ENCODE measurements at regions of chr17 and their contacts with region 1.

Region 1: DNA sequence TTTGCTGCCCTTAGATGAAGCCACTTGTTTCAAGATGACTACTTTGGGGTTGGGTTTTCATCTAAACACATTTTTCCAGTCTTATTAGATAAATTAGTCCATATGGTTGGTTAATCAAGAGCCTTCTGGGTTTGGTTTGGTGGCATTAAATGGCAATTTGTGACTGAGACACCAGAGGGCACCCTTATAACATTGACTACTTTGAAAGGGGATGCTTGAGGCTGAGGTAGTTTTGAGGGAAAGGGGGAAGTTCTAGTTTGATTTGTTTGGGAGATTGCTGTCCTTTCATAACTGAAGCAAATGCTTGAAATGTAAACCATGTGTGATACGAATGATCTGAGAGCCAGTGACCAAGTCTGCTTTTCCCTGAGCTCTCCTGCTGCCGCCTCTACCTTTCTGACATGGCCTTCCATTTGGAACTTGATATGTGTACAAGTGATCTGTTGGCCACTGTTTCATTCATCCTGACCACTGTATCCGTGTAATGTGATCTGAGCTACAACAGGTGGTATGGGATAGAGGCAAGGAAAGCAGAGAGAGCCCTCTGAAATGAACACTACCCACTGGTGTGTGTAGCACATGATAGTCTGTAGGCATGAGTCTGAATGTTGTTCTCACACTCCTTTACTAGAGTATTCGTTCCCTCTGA is 5.8 kb upstream of the RARA start:
- DNase-seq: peak; percentile 71 to 78
- ATAC-seq: peak; percentile 65 to 79
- H3K4me3 ChIP-seq: no peak overlapping the region
- H3K27ac ChIP-seq: peak overlapping the region; percentile 17 to 47; a peak in 4 of 6 replicates
- H3K4me1 ChIP-seq: peaks cover 38% of the 10 kb centered on the region
- CTCF ChIP-seq: peak; percentile 97
- EP300 ChIP-seq: no peak
- POLR2A ChIP-seq: no peak
- RAD21 ChIP-seq: peak; percentile 96 to 98

Region 2: DNA sequence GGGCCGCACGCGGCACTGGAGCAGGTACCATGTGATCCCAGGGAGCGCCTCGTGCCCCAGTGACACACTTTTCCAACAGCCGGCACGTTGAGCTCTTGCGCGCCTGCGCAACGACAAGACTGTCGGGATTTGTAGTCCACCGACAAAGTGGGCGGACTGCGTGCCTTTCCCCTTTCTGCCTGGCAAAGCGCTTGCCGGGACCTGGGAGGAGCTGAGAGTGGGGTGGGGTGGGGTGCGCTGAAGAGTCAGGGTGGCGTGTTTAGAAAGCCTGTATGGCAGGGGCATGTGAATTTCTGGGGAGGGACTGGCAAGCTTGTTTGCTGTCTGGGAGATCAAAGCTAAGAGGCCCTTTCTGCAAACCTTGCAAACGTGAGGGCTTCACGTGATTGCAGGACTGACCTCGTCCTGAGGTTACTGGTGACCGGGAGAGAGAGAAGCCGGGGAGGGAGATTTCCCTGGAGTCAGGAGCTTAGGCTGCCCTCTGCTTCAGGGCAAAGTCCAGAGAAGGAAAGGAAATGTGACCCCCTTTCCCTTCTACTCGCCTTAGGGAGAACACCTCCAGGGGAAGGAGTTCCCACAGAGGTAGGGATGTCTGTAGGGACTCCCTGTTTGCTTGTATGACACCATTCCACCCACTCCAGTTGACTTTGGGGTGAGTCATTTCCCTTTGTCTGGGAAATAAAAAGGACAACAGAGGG is 202.3 kb before region 1 on chr17:
- CTCF ChIA-PET with region 1: no interaction called
- POLR2A ChIA-PET with region 1: no interaction called
- DNase-seq: peak; percentile 99 to 100
- ATAC-seq: peak; percentile 62 to 82
- H3K4me3 ChIP-seq: peak overlapping the region; percentile 54
- H3K27ac ChIP-seq: peak overlapping the region; percentile 89
- H3K4me1 ChIP-seq: peaks cover 63% of the 10 kb centered on the region
- CTCF ChIP-seq: no peak
- EP300 ChIP-seq: peak in 1 of 2 experiments; percentile 34; a peak in 1 of 5 replicates
- POLR2A ChIP-seq: no peak
- RAD21 ChIP-seq: 0 out of 5 replicates have a peak, but pooled peaks of 1 of the 2 experiments have one; percentile 23

Region 3: GRCh38 chr17:40203131-40203530 is 100.0 kb before region 1 on chr17:
- CTCF ChIA-PET with region 1: interaction called, 232 read pairs
- POLR2A ChIA-PET with region 1: no interaction called
- DNase-seq: no peak
- ATAC-seq: no peak
- H3K4me3 ChIP-seq: no peak overlapping the region
- H3K27ac ChIP-seq: no peak overlapping the region
- H3K4me1 ChIP-seq: no peaks in the 10 kb centered on the region
- CTCF ChIP-seq: no peak
- EP300 ChIP-seq: no peak
- POLR2A ChIP-seq: no peak
- RAD21 ChIP-seq: no peak

Region 4: DNA sequence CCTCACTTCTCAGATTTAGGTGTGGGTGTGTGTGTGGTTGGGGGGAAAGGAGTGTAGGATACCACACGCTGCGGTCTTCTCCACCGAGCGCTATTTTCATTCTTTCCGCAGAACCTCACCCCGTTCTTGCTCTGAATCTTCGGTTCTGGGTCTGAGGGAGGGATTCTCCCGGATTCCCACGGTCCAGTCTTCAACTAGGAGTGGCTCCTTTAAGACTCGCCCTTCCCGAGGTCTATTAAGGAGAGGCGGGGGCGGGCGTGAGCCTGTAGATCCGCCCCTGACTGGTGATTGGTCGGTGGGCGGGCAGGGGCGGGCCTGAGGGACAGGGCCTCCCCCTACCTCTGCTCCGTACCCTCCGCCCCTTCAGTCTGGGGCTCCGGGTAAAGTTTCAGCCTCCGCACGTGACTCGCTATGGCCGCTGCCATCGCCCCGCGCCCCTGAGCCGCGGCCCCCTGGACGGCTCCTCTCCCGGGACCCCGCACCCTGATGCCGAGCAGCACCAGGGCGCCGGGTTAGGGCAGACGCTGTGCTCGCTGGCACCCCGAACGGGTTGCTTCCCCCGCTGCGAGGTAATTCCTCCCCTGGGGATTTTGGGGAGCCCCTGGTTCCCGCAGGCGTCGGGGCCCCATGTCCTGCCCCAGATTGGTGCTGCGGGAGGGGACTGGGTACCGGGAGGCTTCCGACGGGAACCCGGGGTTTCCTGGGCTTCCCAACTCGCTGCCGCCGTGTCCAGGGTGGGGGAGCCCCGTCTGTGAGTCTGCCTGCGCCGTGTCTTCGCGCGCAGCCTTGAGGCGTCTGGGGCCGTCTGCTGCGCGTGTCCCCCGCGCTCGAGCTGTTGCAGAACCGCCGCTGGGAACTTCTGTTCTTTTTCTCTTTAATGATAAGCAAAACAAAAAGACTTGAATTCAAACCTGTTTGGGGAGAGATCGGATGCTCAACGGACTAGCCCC is 15.0 kb after region 1 on chr17:
- CTCF ChIA-PET with region 1: interaction called, 1,069 read pairs
- POLR2A ChIA-PET with region 1: interaction called, 14 read pairs
- DNase-seq: peak; percentile 98 to 99
- ATAC-seq: peak; percentile 69 to 87
- H3K4me3 ChIP-seq: peak overlapping the region; percentile 81
- H3K27ac ChIP-seq: peak overlapping the region; percentile 95 to 97
- H3K4me1 ChIP-seq: peaks cover 86% of the 10 kb centered on the region
- CTCF ChIP-seq: no peak
- EP300 ChIP-seq: no peak
- POLR2A ChIP-seq: peak; percentile 9
- RAD21 ChIP-seq: no peak

Region 5: DNA sequence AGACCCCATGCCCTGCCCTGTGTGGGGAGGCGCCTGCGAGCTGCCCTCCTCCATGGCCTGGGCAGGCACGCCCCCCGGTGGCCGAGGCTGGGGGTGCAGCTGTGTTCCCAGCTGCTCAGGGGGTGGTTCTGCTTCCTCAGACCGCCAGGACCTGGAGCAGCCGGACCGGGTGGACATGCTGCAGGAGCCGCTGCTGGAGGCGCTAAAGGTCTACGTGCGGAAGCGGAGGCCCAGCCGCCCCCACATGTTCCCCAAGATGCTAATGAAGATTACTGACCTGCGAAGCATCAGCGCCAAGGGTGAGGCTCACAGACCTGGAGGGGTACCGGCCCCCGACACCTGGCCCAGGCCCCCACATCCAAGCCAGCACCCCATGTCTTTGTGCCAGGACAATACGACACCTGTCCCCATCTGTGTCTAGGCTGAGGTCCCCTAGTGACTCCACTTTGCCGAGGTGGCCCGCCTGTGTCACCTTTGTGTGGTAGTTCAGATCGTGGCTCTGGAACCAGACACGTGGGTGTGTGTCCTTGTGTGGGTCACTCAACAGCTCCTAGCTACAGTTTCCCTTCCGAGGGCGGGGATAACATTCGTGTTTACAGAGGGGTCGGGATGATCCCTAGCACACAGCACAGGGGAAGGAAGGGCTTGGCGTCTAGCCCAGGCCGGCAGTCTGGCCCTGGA is 52.1 kb after region 1 on chr17:
- CTCF ChIA-PET with region 1: interaction called, 2,395 read pairs
- POLR2A ChIA-PET with region 1: interaction called, 13 read pairs
- DNase-seq: peak; percentile 77 to 97
- ATAC-seq: peak; percentile 58 to 84
- H3K4me3 ChIP-seq: no peak overlapping the region
- H3K27ac ChIP-seq: peak overlapping the region in 1 of 2 experiments; percentile 62; a peak in 3 of 6 replicates
- H3K4me1 ChIP-seq: peaks cover 52% of the 10 kb centered on the region
- CTCF ChIP-seq: peak; percentile 98
- EP300 ChIP-seq: no peak
- POLR2A ChIP-seq: no peak
- RAD21 ChIP-seq: peak; percentile 99 to 100

Region 6: GRCh38 chr17:40410082-40410481 is 106.9 kb after region 1 on chr17:
- CTCF ChIA-PET with region 1: interaction called, 19 read pairs
- POLR2A ChIA-PET with region 1: no interaction called
- DNase-seq: no peak
- ATAC-seq: no peak
- H3K4me3 ChIP-seq: no peak overlapping the region
- H3K27ac ChIP-seq: 0 out of 6 replicates have a peak overlapping the region, but pooled peaks of 1 of the 2 experiments have one; percentile 15
- H3K4me1 ChIP-seq: peaks cover 14% of the 10 kb centered on the region
- CTCF ChIP-seq: no peak
- EP300 ChIP-seq: no peak
- POLR2A ChIP-seq: no peak
- RAD21 ChIP-seq: no peak